GM12878 (cell line): ENCODE measurements at regions of chr10 and their contacts with region 1.

Region 1: GRCh38 chr10:71957546-71958275 is 6.5 kb upstream of the CHST3 start:
- DNase-seq: no peak
- ATAC-seq: no peak
- H3K4me3 ChIP-seq: no peak overlapping the region
- H3K27ac ChIP-seq: no peak overlapping the region
- H3K4me1 ChIP-seq: no peaks in the 10 kb centered on the region
- H3K27me3 ChIP-seq: peaks cover 0 to 3% of the 10 kb centered on the region in 2 experiments; a peak in 1 of 4 replicates
- CTCF ChIP-seq: no peak
- EP300 ChIP-seq: no peak
- POLR2A ChIP-seq: no peak
- RAD21 ChIP-seq: no peak

Region 2: DNA sequence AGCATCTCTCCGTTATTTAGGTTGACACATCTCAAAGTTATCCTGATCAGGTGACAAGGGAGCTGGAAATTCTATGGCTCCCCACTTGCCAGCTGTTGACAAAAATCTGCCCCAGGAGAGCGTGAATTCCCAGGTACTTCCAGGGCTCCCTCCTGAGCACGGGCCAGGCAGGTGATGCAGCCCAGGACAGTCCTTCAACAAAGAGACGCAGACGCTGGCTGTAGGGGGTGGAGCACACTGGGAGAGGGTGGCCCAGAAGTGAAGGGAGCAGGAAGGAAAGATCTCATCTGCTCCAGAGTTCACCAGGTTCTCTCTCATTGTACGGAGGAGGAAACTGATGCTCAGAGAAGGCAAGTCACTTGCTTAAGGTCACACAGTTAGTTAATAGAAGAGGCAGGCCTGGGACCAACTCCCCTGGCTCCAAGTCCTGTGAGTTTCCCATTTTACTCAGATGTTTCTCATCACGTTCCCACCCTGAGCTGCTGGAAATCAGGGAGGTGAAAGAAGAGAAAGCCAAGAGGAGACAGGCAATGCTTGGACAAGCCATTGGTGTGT is 34.5 kb before region 1 on chr10:
- CTCF ChIA-PET with region 1: no interaction called
- POLR2A ChIA-PET with region 1: no interaction called
- RAD21 ChIA-PET with region 1: no interaction called
- SMC1A ChIA-PET with region 1: no interaction called
- in situ Hi-C with region 1: no loop called
- intact Hi-C with region 1: no loop called
- DNase-seq: no peak
- ATAC-seq: no peak
- H3K4me3 ChIP-seq: no peak overlapping the region
- H3K27ac ChIP-seq: no peak overlapping the region
- H3K4me1 ChIP-seq: no peaks in the 10 kb centered on the region
- H3K27me3 ChIP-seq: peaks cover 0 to 1% of the 10 kb centered on the region in 2 experiments; a peak in 2 of 4 replicates
- CTCF ChIP-seq: no peak
- EP300 ChIP-seq: no peak
- POLR2A ChIP-seq: no peak
- RAD21 ChIP-seq: no peak

Region 3: GRCh38 chr10:71974489-71975021 is 16.8 kb after region 1 on chr10:
- CTCF ChIA-PET with region 1: interaction called, 11 read pairs
- POLR2A ChIA-PET with region 1: no interaction called
- RAD21 ChIA-PET with region 1: no interaction called
- SMC1A ChIA-PET with region 1: interaction called, 8 read pairs
- in situ Hi-C with region 1: no loop called
- intact Hi-C with region 1: no loop called
- DNase-seq: no peak
- ATAC-seq: peak; percentile 89
- H3K4me3 ChIP-seq: no peak overlapping the region
- H3K27ac ChIP-seq: no peak overlapping the region
- H3K4me1 ChIP-seq: peaks cover 22% of the 10 kb centered on the region
- H3K27me3 ChIP-seq: no peaks in the 10 kb centered on the region; a peak in 1 of 4 replicates
- CTCF ChIP-seq: no peak
- EP300 ChIP-seq: no peak
- POLR2A ChIP-seq: no peak
- RAD21 ChIP-seq: no peak

Region 4: DNA sequence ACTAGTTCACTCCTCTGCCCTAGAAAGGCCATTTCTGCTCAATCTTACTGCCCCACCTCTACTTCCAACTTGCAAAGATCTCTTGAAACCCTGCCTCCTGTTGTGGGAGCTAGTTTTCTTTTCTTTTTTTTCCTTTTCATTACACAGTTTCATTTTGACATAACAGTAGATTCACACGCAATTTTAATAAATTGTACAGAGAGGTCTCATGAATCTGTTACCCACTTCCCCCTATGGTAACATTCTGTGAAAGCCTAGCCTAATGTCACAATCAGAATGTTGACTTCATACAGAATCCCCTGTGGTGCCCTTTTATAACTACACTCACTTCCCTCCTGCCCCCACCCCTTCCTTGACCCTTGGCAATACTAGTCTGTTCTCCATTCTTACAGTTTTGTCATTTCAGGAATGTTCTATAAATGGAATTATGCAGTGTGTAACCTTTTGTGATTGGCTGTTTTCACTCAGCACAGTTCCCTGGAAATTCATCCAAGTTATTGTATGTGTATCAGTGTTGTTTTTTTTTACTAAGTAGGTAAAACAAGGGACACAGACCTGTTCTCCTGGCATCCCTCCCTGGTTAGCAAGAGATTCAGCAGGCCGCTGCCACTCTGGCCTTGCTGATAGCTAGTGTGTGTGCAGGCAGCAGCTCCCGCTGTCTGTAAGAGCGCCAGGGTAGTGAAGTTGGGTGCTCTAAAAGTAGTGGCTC is 28.0 kb after region 1 on chr10:
- CTCF ChIA-PET with region 1: interaction called, 11 read pairs
- POLR2A ChIA-PET with region 1: no interaction called
- RAD21 ChIA-PET with region 1: interaction called, 6 read pairs
- SMC1A ChIA-PET with region 1: interaction called, 25 read pairs
- in situ Hi-C with region 1: no loop called
- intact Hi-C with region 1: no loop called
- DNase-seq: peak; percentile 73
- ATAC-seq: peak; percentile 83
- H3K4me3 ChIP-seq: no peak overlapping the region
- H3K27ac ChIP-seq: peak overlapping the region; percentile 88
- H3K4me1 ChIP-seq: peaks cover 40% of the 10 kb centered on the region
- H3K27me3 ChIP-seq: no peaks in the 10 kb centered on the region
- CTCF ChIP-seq: no peak
- EP300 ChIP-seq: 0 out of 4 replicates have a peak, but pooled peaks have one; percentile 41 to 55
- POLR2A ChIP-seq: no peak
- RAD21 ChIP-seq: no peak

Region 5: DNA sequence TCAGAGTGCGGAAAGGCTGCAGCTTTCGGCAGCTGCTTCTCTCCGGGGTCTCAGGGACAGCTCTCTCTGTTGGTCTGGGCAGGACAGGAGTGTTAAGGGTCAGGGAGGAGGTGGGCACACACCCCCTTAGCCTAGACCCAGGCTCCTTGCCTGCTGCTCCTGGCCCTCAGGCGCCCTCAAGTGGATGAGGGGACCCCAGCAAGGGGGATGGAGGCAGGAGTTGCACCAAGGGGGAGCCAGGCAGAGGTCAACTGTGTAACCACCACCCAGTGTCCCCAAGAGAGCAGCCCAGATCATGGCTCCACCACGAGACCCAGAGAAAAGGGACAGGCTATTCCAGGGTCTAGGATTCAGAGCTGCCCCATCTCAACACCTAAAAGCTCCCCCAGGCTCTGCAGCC is 103.8 kb after region 1 on chr10:
- CTCF ChIA-PET with region 1: interaction called, 20 read pairs
- POLR2A ChIA-PET with region 1: no interaction called
- RAD21 ChIA-PET with region 1: interaction called, 4 read pairs
- SMC1A ChIA-PET with region 1: interaction called, 5 read pairs
- in situ Hi-C with region 1: no loop called
- intact Hi-C with region 1: no loop called
- DNase-seq: no peak
- ATAC-seq: peak; percentile 69
- H3K4me3 ChIP-seq: no peak overlapping the region
- H3K27ac ChIP-seq: no peak overlapping the region
- H3K4me1 ChIP-seq: peaks cover 9% of the 10 kb centered on the region
- H3K27me3 ChIP-seq: no peaks in the 10 kb centered on the region
- CTCF ChIP-seq: peak; percentile 16 to 55 (median 53); a peak in 4 of 6 replicates
- EP300 ChIP-seq: no peak
- POLR2A ChIP-seq: no peak
- RAD21 ChIP-seq: peak; percentile 37; the same call in 1 of the 2 replicates